Activated T-helper 2 cell treated with anti-CD3 and anti-CD28 coated beads, Interferon-gamma antibody, Interleukin-2, Interleukin-4, amounts not matched to agents 10 μg/mL and 5 μg/mL and 100 μg/mL, durations not matched to agents 14 hours and 24 hours and 36 hours (primary cell): ENCODE measurements at regions of chr3 and their contacts with region 1.

Region 1: DNA sequence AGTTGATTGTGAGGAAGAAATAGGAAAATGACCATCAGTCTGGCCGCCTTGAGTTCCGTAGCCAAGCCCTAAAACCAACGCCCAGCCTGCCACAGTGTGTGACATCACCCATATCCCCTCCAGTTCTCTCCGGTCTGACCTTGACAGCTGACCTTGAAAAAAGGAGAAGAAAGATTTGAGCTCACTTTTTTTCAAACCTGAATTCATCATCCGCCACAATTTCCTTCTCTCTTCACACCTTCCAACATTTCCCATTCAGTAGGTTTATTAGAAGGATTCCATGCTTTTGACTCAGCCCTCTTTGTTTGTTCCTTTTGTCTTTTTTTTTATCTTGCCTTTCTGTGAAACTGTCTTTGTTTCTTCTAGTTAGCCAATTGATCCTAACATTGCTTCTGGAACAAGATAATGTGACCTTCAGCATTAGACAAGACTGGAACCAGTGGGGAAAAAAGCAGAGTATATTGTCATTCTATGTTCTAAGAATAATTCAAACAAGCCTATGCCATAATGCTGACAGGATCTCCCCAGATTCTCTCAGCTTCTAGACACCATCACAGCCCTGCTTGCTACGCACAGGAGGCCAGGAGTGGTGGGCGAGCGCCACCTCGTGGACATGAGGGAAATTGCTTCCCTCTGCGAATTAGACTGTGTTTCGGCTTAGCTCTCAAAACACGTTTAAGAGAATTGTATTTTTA is 283.1 kb downstream of the FGF12 start:
- DNase-seq: peak; percentile 28
- H3K4me3 Mint-ChIP-seq: no peak overlapping the region
- H3K27ac Mint-ChIP-seq: no peak overlapping the region
- H3K4me1 Mint-ChIP-seq: peaks cover 2% of the 10 kb centered on the region
- H3K27me3 Mint-ChIP-seq: peaks cover 20% of the 10 kb centered on the region

Region 2: GRCh38 chr3:192130534-192131132 is 313.6 kb before region 1 on chr3:
- intact Hi-C with region 1: loop called (anchors 2 kb)
- DNase-seq: no peak
- H3K4me3 Mint-ChIP-seq: no peak overlapping the region
- H3K27ac Mint-ChIP-seq: no peak overlapping the region
- H3K4me1 Mint-ChIP-seq: no peaks in the 10 kb centered on the region
- H3K27me3 Mint-ChIP-seq: no peaks in the 10 kb centered on the region

Region 3: DNA sequence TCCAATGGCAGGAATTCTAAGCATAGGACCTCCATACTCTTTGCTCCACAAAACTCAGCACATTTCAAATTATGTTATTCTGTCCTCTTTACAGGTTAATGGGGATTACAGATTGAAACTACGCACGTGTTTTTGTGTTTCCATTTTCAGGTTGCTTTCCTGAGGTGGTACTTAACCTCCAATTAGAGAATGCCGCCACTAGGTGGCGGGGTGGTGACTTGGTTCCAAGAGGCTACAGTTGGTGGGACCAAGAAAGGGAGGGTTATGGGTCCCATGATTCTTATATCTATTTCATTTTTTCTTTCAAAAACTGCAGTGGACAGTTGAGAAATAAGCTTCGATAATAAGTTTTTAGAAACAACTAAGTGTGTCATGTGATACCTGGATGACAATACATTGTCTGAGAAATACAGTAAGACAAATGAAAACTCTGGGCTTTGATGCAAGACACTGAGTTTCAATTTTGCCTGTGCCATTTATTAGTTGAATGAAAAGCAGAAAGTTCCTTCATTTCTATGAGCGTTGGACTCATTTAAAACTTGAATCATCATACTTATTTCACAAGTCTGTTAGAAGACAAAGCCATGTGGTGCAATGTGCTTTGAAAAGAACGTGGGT is 255.9 kb before region 1 on chr3:
- intact Hi-C with region 1: loop called (anchors 1 kb)
- DNase-seq: peak; percentile 10
- H3K4me3 Mint-ChIP-seq: no peak overlapping the region
- H3K27ac Mint-ChIP-seq: no peak overlapping the region
- H3K4me1 Mint-ChIP-seq: no peaks in the 10 kb centered on the region
- H3K27me3 Mint-ChIP-seq: no peaks in the 10 kb centered on the region

Region 4: DNA sequence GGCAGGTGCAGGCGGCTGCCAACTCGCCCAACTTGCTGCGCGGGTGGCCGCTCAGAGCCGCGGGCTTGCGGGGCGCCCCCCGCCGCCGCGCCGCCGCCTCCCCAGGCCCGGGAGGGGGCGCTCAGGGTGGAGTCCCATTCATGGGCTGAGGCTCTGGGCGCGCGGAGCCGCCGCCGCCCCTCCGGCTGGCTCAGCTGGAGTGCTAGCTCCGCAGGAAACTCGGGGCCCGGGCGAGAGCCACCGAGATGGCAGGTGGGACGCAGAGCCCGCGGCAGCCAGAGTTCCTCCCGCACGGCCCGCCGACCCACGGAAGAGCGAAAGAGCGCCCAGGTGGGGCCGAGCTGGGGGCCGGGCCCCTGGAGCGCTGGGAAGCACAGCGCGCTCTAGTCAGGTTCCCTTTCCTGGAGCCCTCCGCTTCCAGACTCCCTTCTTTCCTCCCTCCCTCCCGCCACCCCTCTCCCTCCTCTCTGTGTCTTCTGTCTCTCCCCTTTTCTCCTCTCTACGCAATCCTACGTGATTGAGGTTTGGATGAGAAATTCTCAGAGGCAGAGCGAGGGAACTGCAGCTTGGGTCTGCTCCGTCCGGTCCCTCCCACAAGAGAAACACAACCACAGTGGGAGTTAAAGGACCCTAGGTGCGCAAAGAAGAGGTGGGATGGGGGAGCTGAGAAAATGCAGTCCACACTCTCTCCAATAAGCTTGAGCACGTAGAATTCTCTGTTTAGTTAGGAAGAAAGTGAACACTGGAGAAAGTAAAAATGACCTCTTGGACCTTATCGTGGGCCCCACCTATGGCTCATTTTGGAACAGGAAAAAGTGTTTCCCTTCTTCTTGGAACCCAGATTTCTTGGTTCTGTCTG is 34.2 kb before region 1 on chr3:
- intact Hi-C with region 1: no loop called
- DNase-seq: no peak
- H3K4me3 Mint-ChIP-seq: no peak overlapping the region
- H3K27ac Mint-ChIP-seq: no peak overlapping the region
- H3K4me1 Mint-ChIP-seq: peaks cover 3% of the 10 kb centered on the region
- H3K27me3 Mint-ChIP-seq: peaks cover 50% of the 10 kb centered on the region